Activated CD4-positive, alpha-beta T cell treated with anti-CD3 and anti-CD28 coated beads for 36 hours (primary cell): ENCODE measurements at regions of chr10 and their contacts with region 1.

Region 1: DNA sequence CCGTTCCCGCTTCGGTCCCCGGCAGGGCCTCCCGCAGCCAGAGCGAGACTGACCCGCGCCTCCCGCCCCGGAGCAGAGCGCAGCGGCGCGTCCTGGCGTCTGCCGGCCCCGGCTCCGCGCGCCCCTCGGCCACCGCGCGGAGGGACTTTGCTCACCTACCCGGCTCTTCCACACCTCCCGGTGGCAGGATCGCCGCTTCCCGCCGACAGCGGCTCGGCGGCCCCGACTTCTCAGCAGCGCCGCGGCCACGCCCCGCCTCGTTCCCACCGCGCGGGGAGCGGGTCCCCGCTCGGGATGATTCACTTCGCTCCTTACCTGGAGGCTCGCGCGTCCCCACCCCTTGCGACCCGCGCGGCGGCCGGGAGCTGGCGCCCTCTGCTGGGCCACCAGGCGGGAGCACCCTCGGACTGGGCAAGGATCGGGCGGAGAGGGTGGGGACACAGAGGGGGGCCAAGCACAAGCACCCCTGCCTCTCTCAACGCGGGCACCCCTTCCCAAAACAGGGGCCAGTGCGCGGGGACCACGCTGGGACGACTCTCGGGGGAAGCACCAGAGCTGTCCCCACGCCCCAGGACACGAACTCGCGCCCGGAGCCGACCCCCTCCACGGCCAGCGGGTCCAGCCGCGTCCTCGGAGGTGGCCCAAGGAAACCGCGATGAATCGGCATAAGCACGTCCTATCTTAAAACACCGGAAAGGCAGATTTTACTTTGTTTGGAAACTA is 101.0 kb upstream of the SVIL start:
- DNase-seq: peak; percentile 92
- ATAC-seq: peak; percentile 86
- H3K4me3 Mint-ChIP-seq: peak overlapping the region; percentile 74
- H3K27ac Mint-ChIP-seq: no peak overlapping the region
- H3K4me1 Mint-ChIP-seq: peaks cover 33% of the 10 kb centered on the region
- H3K27me3 Mint-ChIP-seq: peaks cover 6% of the 10 kb centered on the region

Region 2: DNA sequence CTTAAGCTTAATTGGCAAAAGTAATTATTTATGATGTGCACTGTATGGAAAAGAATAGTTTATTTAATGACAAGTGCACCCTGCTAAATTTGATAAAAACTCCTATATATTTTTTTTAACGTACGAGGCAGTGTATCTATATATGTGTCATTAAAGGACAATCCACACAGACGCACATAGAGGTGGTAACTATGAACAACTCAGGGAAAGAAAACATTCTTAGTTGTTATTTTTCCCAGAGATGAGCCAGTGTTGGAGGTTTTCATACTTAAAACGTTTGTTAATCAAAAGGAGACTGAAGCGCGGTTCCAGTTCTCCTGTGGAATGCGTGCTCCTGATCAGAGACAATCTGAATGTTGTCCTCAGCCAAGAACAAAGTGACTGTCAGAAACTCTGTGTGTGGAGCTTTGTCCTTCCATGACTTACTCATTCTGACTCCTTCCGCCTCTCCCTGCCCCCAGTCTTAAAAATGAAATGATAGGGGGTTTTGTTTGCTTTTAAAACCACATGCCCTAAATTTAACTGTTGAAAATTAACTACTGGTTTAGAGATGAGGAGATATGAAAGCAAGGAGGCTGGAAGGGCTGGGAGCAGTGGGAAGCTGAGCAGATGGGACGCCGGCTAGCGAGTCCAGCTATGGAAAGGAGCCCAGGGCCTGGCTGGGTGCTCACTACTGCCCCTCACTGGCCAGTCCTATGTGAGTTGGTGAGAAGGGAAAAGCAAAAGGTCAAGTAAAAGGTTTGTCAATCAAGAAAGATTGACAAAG is 200.6 kb before region 1 on chr10:
- CTCF ChIA-PET with region 1: no interaction called
- POLR2A ChIA-PET with region 1: no interaction called
- intact Hi-C with region 1: loop called in 1 of 2 experiments (anchors 10 kb)
- DNase-seq: peak; percentile 22
- ATAC-seq: peak; percentile 26
- H3K4me3 Mint-ChIP-seq: no peak overlapping the region
- H3K27ac Mint-ChIP-seq: no peak overlapping the region
- H3K4me1 Mint-ChIP-seq: peaks cover 5% of the 10 kb centered on the region
- H3K27me3 Mint-ChIP-seq: no peaks in the 10 kb centered on the region

Region 3: GRCh38 chr10:29635711-29636144 is 100.0 kb before region 1 on chr10:
- CTCF ChIA-PET with region 1: no interaction called
- POLR2A ChIA-PET with region 1: no interaction called
- intact Hi-C with region 1: loop called (anchors 1 to 5 kb)
- DNase-seq: peak; percentile 22
- ATAC-seq: no peak
- H3K4me3 Mint-ChIP-seq: no peak overlapping the region
- H3K27ac Mint-ChIP-seq: no peak overlapping the region
- H3K4me1 Mint-ChIP-seq: peaks cover 46% of the 10 kb centered on the region
- H3K27me3 Mint-ChIP-seq: no peaks in the 10 kb centered on the region

Region 4: DNA sequence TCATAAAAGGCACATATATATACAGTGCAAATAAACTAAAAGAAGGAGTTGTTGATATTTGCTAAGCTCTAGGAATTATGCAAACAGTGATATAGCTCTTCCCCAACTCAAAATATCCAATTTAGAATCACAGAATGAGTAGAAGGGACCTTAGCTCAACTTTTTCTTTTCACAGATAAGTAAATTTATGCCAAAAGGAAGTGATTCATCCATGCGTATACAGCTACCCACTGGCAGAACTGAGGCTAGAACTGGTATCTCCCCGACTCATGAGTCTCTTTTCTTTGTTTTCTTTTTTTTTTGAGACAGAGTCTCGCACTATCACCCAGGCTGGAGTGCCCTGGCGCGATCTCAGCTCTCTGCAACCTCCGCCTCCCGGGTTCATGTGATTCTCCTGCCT is 46.8 kb before region 1 on chr10:
- CTCF ChIA-PET with region 1: interaction called, 5 read pairs
- POLR2A ChIA-PET with region 1: interaction called, 3 read pairs
- intact Hi-C with region 1: loop called in 1 of 2 experiments (anchors 2 kb)
- DNase-seq: peak; percentile 50
- ATAC-seq: peak; percentile 98
- H3K4me3 Mint-ChIP-seq: no peak overlapping the region
- H3K27ac Mint-ChIP-seq: no peak overlapping the region
- H3K4me1 Mint-ChIP-seq: peaks cover 49% of the 10 kb centered on the region
- H3K27me3 Mint-ChIP-seq: no peaks in the 10 kb centered on the region

Region 5: GRCh38 chr10:29804025-29804852 is 68.5 kb after region 1 on chr10:
- CTCF ChIA-PET with region 1: no interaction called
- POLR2A ChIA-PET with region 1: no interaction called
- intact Hi-C with region 1: loop called in 1 of 2 experiments (anchors 2 kb)
- DNase-seq: peak; percentile 69
- ATAC-seq: peak; percentile 89
- H3K4me3 Mint-ChIP-seq: no peak overlapping the region
- H3K27ac Mint-ChIP-seq: peak overlapping the region; percentile 27
- H3K4me1 Mint-ChIP-seq: peaks cover 17% of the 10 kb centered on the region
- H3K27me3 Mint-ChIP-seq: peaks cover 11% of the 10 kb centered on the region

Region 6: DNA sequence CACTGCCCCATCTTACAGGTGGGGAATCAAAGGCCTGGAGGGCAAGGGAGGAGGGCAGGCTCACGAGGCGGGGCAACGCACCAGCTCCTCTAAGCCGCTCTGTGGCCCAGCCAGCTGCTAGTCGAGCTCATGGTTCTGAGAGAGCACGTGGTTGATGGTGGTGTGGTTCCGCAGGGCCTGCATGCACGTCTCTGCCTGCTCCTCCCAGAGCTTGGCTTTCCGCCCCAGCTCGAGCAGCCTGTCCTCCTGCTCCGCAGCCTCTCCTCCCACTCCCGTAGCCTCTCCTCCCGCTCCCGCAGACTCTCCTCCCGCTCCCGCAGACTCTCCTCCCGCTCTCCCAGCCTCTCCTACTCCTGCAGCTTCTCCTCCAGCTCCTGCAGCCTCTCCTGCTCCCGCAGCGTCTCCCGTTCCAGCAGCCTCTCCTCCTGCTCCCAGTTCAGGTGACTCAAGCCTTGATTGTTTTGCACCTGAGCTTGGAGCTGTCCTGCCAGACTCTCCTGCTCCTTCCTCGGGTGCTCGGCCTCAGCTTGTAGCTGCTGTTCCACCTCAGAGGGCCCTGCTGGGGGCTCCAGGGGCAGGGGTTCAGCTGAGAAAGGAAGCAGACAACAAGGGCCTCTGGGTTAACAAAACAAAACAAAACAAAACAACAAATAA is 632.4 kb after region 1 on chr10:
- CTCF ChIA-PET with region 1: no interaction called
- POLR2A ChIA-PET with region 1: no interaction called
- intact Hi-C with region 1: no loop called
- DNase-seq: no peak
- ATAC-seq: no peak
- H3K4me3 Mint-ChIP-seq: no peak overlapping the region
- H3K27ac Mint-ChIP-seq: no peak overlapping the region
- H3K4me1 Mint-ChIP-seq: peaks cover 15% of the 10 kb centered on the region
- H3K27me3 Mint-ChIP-seq: peaks cover 2% of the 10 kb centered on the region